MCF 10A (cell line): ENCODE measurements at regions of chr5 and their contacts with region 1.

Region 1: GRCh38 chr5:40679155-40679913 is 381 bp upstream of the PTGER4 start:
- DNase-seq: peak; percentile 96
- H3K4me3 Mint-ChIP-seq: peak overlapping the region; percentile 91
- H3K27ac Mint-ChIP-seq: peak overlapping the region; percentile 97
- H3K4me1 Mint-ChIP-seq: peaks cover 60% of the 10 kb centered on the region
- H3K27me3 Mint-ChIP-seq: no peaks in the 10 kb centered on the region
- CTCF ChIP-seq: no peak

Region 2: GRCh38 chr5:39948867-39949468 is 730.4 kb before region 1 on chr5:
- CTCF ChIA-PET with region 1: interaction called, 25 read pairs
- POLR2A ChIA-PET with region 1: interaction called, 3 read pairs
- intact Hi-C with region 1: no loop called
- DNase-seq: peak; percentile 79
- H3K4me3 Mint-ChIP-seq: no peak overlapping the region
- H3K27ac Mint-ChIP-seq: no peak overlapping the region
- H3K4me1 Mint-ChIP-seq: peaks cover 5% of the 10 kb centered on the region
- H3K27me3 Mint-ChIP-seq: no peaks in the 10 kb centered on the region
- CTCF ChIP-seq: peak; percentile 62

Region 3: DNA sequence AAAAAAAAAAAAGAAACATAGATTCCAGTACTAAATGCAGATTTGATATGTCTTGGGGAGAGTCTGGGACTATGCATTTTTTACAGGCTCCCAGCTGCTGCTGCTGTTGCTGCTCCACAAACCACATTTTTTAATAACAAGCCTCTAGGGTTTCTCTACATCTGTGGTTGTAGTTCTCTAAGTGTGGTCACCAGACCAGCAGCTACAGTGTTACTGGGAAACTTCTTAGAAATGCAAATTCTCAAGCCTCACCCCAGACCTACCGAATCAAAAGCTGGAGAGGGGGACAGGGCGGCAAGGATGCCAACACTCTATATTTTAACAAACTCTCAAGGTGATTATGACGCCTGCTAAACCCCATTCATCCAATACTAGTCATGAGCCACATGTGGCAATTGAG is 293.0 kb before region 1 on chr5:
- CTCF ChIA-PET with region 1: no interaction called
- POLR2A ChIA-PET with region 1: interaction called, 6 read pairs
- intact Hi-C with region 1: loop called (anchors 2 kb)
- DNase-seq: no peak
- H3K4me3 Mint-ChIP-seq: no peak overlapping the region
- H3K27ac Mint-ChIP-seq: no peak overlapping the region
- H3K4me1 Mint-ChIP-seq: peaks cover 26% of the 10 kb centered on the region
- H3K27me3 Mint-ChIP-seq: no peaks in the 10 kb centered on the region
- CTCF ChIP-seq: no peak

Region 4: GRCh38 chr5:40507095-40507494 is 172.2 kb before region 1 on chr5:
- CTCF ChIA-PET with region 1: no interaction called
- POLR2A ChIA-PET with region 1: interaction called, 3 read pairs
- intact Hi-C with region 1: loop called (anchors 2 kb)
- DNase-seq: no peak
- H3K4me3 Mint-ChIP-seq: no peak overlapping the region
- H3K27ac Mint-ChIP-seq: no peak overlapping the region
- H3K4me1 Mint-ChIP-seq: no peaks in the 10 kb centered on the region
- H3K27me3 Mint-ChIP-seq: no peaks in the 10 kb centered on the region
- CTCF ChIP-seq: no peak

Region 5: GRCh38 chr5:40603378-40603777 is 76.0 kb before region 1 on chr5:
- CTCF ChIA-PET with region 1: no interaction called
- POLR2A ChIA-PET with region 1: interaction called, 6 read pairs
- intact Hi-C with region 1: loop called (anchors 5 kb)
- DNase-seq: no peak
- H3K4me3 Mint-ChIP-seq: no peak overlapping the region
- H3K27ac Mint-ChIP-seq: peak overlapping the region; percentile 55
- H3K4me1 Mint-ChIP-seq: peaks cover 32% of the 10 kb centered on the region
- H3K27me3 Mint-ChIP-seq: no peaks in the 10 kb centered on the region
- CTCF ChIP-seq: no peak